PC-9 (cell line): ENCODE measurements at regions of chr11 and their contacts with region 1.

Region 1: GRCh38 chr11:121367001-121367843 is 74.7 kb downstream of the SC5D start:
- DNase-seq: no peak
- H3K4me3 ChIP-seq: no peak overlapping the region
- H3K27ac ChIP-seq: no peak overlapping the region
- H3K4me1 ChIP-seq: no peaks in the 10 kb centered on the region
- H3K27me3 ChIP-seq: peaks cover 91% of the 10 kb centered on the region
- CTCF ChIP-seq: no peak

Region 2: DNA sequence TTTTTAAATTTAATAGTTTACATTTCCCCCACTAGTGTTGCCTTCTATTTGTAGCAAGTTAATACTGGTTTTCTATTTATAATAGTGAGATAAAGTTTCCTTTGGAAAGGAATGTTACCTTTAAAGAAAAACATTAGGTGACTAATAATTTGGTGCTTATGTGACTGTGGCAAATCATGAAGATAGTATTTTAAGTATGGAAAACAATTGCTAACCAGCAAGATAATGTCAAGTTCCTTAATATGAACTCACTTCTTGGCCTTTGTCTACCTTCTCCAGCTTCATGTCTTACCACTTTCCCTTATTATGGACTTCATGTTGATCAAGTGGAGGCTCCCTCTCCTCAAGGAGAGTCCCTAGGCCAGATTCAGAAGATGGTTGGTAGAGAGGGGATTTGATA is 1003.8 kb before region 1 on chr11:
- CTCF ChIA-PET with region 1: no interaction called
- POLR2A ChIA-PET with region 1: interaction called, 11 read pairs
- intact Hi-C with region 1: no loop called
- DNase-seq: no peak
- H3K4me3 ChIP-seq: no peak overlapping the region
- H3K27ac ChIP-seq: no peak overlapping the region
- H3K4me1 ChIP-seq: no peaks in the 10 kb centered on the region
- H3K27me3 ChIP-seq: no peaks in the 10 kb centered on the region
- CTCF ChIP-seq: no peak

Region 3: GRCh38 chr11:121389651-121390050 is 22.4 kb after region 1 on chr11:
- CTCF ChIA-PET with region 1: no interaction called
- POLR2A ChIA-PET with region 1: no interaction called
- intact Hi-C with region 1: no loop called
- DNase-seq: no peak
- H3K4me3 ChIP-seq: no peak overlapping the region
- H3K27ac ChIP-seq: no peak overlapping the region
- H3K4me1 ChIP-seq: no peaks in the 10 kb centered on the region
- H3K27me3 ChIP-seq: peaks cover 92% of the 10 kb centered on the region
- CTCF ChIP-seq: no peak